Activated CD8-positive, alpha-beta T cell treated with anti-CD3 and anti-CD28 coated beads for 36 hours (primary cell): ENCODE measurements at regions of chr20 and their contacts with region 1.

Region 1: GRCh38 chr20:40990542-40991120 is 38.0 kb upstream of the TOP1 start:
- DNase-seq: peak; percentile 86
- ATAC-seq: peak; percentile 93
- H3K4me3 Mint-ChIP-seq: no peak overlapping the region
- H3K27ac Mint-ChIP-seq: peak overlapping the region; percentile 85
- H3K4me1 Mint-ChIP-seq: peaks cover 28% of the 10 kb centered on the region
- H3K27me3 Mint-ChIP-seq: no peaks in the 10 kb centered on the region
- CTCF ChIP-seq: peak; percentile 87

Region 2: GRCh38 chr20:40880063-40880728 is 110.4 kb before region 1 on chr20:
- CTCF ChIA-PET with region 1: no interaction called
- POLR2A ChIA-PET with region 1: no interaction called
- intact Hi-C with region 1: no loop called
- DNase-seq: no peak
- ATAC-seq: no peak
- H3K4me3 Mint-ChIP-seq: no peak overlapping the region
- H3K27ac Mint-ChIP-seq: no peak overlapping the region
- H3K4me1 Mint-ChIP-seq: peaks cover 13% of the 10 kb centered on the region
- H3K27me3 Mint-ChIP-seq: no peaks in the 10 kb centered on the region
- CTCF ChIP-seq: no peak

Region 3: DNA sequence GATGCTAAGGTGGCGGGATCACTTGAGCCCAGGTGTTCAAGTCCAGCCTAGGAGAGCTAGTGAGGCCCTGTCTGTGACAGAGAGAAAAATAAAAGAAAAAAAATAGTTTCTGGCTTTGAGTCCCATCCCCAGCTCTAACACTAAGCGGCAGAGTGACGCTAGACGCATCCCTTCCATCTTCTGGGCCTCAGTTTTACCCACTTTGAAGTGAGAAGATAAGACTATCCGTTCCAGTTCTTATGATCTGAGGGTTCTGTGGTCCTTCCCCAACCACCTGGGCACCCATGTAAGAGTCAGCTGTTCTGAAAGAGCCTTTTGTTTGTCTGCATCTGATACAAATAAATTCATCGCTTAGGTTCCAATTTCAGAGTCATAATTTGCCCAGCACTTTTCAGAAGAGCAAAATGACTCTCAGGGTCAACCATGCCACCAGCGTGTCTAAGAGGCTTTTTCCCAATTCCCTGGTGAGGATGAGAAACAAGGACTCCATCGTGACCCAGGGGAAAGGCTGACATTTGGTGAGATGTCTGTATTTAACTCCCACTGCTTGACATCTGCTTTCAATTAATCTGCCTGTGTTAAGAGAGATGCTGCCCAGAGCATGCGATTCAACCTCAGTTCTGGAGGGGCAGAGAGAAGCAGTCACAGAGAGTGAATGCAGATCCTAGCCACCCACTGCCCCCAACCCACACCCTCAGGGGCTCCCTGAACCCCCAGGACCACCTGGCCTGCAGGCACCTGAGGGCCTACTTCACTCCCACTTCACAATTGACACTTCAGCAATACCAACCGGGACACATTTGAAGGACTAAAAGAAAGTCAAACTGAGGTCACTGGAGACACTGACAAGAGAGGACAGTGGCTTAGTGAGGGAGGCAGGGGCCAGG is 93.6 kb before region 1 on chr20:
- CTCF ChIA-PET with region 1: no interaction called
- POLR2A ChIA-PET with region 1: no interaction called
- intact Hi-C with region 1: no loop called
- DNase-seq: no peak
- ATAC-seq: no peak
- H3K4me3 Mint-ChIP-seq: no peak overlapping the region
- H3K27ac Mint-ChIP-seq: no peak overlapping the region
- H3K4me1 Mint-ChIP-seq: no peaks in the 10 kb centered on the region
- H3K27me3 Mint-ChIP-seq: no peaks in the 10 kb centered on the region
- CTCF ChIP-seq: no peak

Region 4: GRCh38 chr20:40980106-40980827 is 10.4 kb before region 1 on chr20:
- CTCF ChIA-PET with region 1: interaction called, 21 read pairs
- POLR2A ChIA-PET with region 1: no interaction called
- intact Hi-C with region 1: no loop called
- DNase-seq: no peak
- ATAC-seq: no peak
- H3K4me3 Mint-ChIP-seq: no peak overlapping the region
- H3K27ac Mint-ChIP-seq: no peak overlapping the region
- H3K4me1 Mint-ChIP-seq: no peaks in the 10 kb centered on the region
- H3K27me3 Mint-ChIP-seq: peaks cover 6% of the 10 kb centered on the region
- CTCF ChIP-seq: no peak

Region 5: DNA sequence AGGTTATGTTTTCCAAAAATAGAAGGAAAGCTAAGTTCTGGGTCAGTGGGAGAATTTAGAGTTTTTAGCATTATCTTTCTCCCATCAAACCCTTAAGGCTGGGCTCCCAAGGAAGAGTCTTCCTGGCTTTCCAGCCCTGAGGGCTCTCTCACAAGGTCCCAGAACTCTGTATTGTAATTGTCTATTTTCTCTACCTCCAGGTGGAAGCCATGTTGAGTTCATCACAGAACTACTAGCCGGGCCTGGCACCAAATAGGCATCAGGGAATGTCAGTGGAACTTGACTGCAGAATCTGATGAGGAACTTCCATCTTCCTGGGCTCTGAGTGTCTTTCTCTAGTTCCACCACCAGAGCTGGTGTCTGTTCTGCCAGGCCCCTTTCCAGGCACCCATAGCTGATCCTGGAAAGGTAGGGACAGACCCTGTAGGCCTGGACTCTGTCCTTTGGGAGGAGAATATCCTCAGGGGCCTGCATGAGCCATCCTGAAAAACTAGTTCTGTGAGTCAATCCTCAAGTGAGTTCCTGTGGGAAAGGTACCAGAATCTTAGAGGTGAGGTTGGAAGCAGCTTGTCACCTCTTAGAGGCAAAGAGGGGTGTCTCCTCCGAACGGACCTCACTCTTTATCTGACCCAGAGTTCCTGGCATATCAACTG is 26.9 kb after region 1 on chr20:
- CTCF ChIA-PET with region 1: interaction called, 27 read pairs
- POLR2A ChIA-PET with region 1: interaction called, 3 read pairs
- intact Hi-C with region 1: no loop called
- DNase-seq: no peak
- ATAC-seq: no peak
- H3K4me3 Mint-ChIP-seq: no peak overlapping the region
- H3K27ac Mint-ChIP-seq: no peak overlapping the region
- H3K4me1 Mint-ChIP-seq: peaks cover 6% of the 10 kb centered on the region
- H3K27me3 Mint-ChIP-seq: no peaks in the 10 kb centered on the region
- CTCF ChIP-seq: no peak

Region 6: DNA sequence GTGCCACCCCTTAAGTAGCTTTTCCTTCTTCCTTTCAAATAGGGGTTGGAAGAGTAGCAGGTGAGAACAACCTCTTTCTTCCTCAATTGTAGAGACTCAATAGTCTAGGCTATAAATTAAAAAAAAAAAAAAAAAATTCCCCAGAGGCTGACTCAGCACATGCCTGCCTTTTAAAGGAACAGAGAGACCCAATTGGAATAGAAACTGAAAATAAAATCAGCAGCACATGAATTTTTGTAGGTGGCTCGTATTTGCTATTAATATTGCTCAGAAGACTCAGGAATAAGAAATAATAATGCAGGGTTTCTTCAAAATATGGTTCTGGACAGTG is 57.3 kb after region 1 on chr20:
- CTCF ChIA-PET with region 1: interaction called, 30 read pairs
- POLR2A ChIA-PET with region 1: no interaction called
- intact Hi-C with region 1: no loop called
- DNase-seq: no peak
- ATAC-seq: peak; percentile 52
- H3K4me3 Mint-ChIP-seq: peak overlapping the region; percentile 79
- H3K27ac Mint-ChIP-seq: peak overlapping the region; percentile 87
- H3K4me1 Mint-ChIP-seq: peaks cover 86% of the 10 kb centered on the region
- H3K27me3 Mint-ChIP-seq: no peaks in the 10 kb centered on the region
- CTCF ChIP-seq: no peak

Region 7: GRCh38 chr20:41078329-41078728 is 87.7 kb after region 1 on chr20:
- CTCF ChIA-PET with region 1: interaction called, 32 read pairs
- POLR2A ChIA-PET with region 1: interaction called, 4 read pairs
- intact Hi-C with region 1: no loop called
- DNase-seq: no peak
- ATAC-seq: peak; percentile 27
- H3K4me3 Mint-ChIP-seq: no peak overlapping the region
- H3K27ac Mint-ChIP-seq: peak overlapping the region; percentile 24
- H3K4me1 Mint-ChIP-seq: peaks cover 44% of the 10 kb centered on the region
- H3K27me3 Mint-ChIP-seq: no peaks in the 10 kb centered on the region
- CTCF ChIP-seq: no peak

Region 8: GRCh38 chr20:41110930-41111577 is 120.4 kb after region 1 on chr20:
- CTCF ChIA-PET with region 1: interaction called, 13 read pairs
- POLR2A ChIA-PET with region 1: no interaction called
- intact Hi-C with region 1: no loop called
- DNase-seq: no peak
- ATAC-seq: no peak
- H3K4me3 Mint-ChIP-seq: no peak overlapping the region
- H3K27ac Mint-ChIP-seq: no peak overlapping the region
- H3K4me1 Mint-ChIP-seq: peaks cover 3% of the 10 kb centered on the region
- H3K27me3 Mint-ChIP-seq: no peaks in the 10 kb centered on the region
- CTCF ChIP-seq: no peak